Mammary epithelial cell (primary cell): ENCODE measurements at regions of chr18 and their contacts with region 1.

Region 1: DNA sequence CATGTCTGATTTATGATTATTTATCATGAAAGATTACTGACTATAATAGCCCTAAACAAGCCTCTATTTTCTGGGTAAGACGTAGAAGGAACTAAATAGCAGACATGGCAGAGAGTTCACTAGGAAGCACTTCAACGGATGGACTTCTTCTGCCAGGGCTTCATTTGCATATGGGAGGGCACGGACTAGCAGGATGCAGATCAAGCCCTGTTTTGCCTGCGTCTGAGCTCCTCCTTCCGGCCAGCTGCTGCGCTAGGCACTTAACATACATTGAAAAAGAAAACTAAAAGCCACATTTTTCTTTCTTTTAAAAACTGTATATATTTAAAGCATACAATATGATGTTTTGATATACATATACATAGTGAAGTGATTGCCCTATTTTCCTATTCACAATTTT is 340.0 kb upstream of the MEX3C start:
- DNase-seq: peak; percentile 66
- H3K4me3 ChIP-seq: no peak overlapping the region
- H3K27ac ChIP-seq: no peak overlapping the region
- H3K4me1 ChIP-seq: no peaks in the 10 kb centered on the region
- H3K27me3 ChIP-seq: no peaks in the 10 kb centered on the region
- CTCF ChIP-seq: peak; percentile 46 to 61

Region 2: GRCh38 chr18:51278045-51278649 is 259.3 kb before region 1 on chr18:
- CTCF ChIA-PET with region 1: no interaction called
- dilution Hi-C with region 1: no loop called
- in situ Hi-C with region 1: loop called (anchors 5 to 25 kb)
- intact Hi-C with region 1: loop called (anchors 1 kb)
- DNase-seq: peak; percentile 57
- H3K4me3 ChIP-seq: no peak overlapping the region
- H3K27ac ChIP-seq: no peak overlapping the region
- H3K4me1 ChIP-seq: no peaks in the 10 kb centered on the region
- H3K27me3 ChIP-seq: no peaks in the 10 kb centered on the region
- CTCF ChIP-seq: peak; percentile 96 to 98

Region 3: DNA sequence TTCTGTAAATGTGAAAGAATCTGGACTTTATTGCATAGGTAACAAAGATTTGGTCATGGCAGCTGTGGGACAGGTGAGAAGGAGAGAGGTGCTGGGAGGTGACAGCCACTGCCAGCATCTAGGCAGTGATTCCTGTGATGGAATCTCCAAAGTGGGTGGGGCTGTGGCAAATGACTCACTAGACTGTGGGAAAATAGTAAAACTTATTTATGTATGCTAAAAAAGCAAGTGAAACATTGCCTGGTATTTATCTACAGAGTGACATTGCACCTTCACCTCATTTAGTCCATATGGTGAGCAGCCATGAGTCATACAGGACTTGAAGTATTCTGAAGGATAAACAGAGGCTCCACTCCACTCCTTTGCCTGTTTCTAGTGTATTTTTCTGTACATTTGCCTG is 194.7 kb before region 1 on chr18:
- CTCF ChIA-PET with region 1: no interaction called
- dilution Hi-C with region 1: no loop called
- in situ Hi-C with region 1: no loop called
- intact Hi-C with region 1: loop called (anchors 5 kb)
- DNase-seq: peak; percentile 89
- H3K4me3 ChIP-seq: no peak overlapping the region
- H3K27ac ChIP-seq: no peak overlapping the region
- H3K4me1 ChIP-seq: peaks cover 43% of the 10 kb centered on the region
- H3K27me3 ChIP-seq: no peaks in the 10 kb centered on the region
- CTCF ChIP-seq: no peak

Region 4: DNA sequence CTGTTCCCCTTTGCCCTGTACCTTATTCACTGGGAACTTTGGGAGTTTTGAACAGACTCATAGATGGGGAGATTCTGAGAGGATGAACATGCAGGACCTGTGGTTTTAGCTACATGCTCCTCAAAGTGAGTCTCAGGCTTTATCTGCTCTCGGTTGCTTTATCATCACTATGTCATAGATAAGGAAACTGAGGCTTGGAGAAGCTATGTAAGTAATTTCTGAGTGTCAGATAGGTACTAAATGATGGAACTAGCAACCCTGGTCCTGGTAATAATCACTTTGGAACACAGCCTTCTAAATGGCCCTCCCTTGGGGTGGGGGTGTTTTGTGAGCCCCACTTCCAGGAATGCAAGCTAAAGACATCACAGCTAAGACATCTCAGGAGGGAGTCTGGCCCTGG is 153.8 kb before region 1 on chr18:
- CTCF ChIA-PET with region 1: no interaction called
- dilution Hi-C with region 1: no loop called
- in situ Hi-C with region 1: no loop called
- intact Hi-C with region 1: loop called (anchors 1 kb)
- DNase-seq: no peak
- H3K4me3 ChIP-seq: no peak overlapping the region
- H3K27ac ChIP-seq: no peak overlapping the region
- H3K4me1 ChIP-seq: no peaks in the 10 kb centered on the region
- H3K27me3 ChIP-seq: no peaks in the 10 kb centered on the region
- CTCF ChIP-seq: no peak

Region 5: GRCh38 chr18:51461956-51462355 is 75.5 kb before region 1 on chr18:
- CTCF ChIA-PET with region 1: no interaction called
- dilution Hi-C with region 1: no loop called
- in situ Hi-C with region 1: no loop called
- intact Hi-C with region 1: loop called (anchors 5 kb)
- DNase-seq: peak; percentile 55
- H3K4me3 ChIP-seq: no peak overlapping the region
- H3K27ac ChIP-seq: no peak overlapping the region
- H3K4me1 ChIP-seq: peaks cover 7% of the 10 kb centered on the region
- H3K27me3 ChIP-seq: no peaks in the 10 kb centered on the region
- CTCF ChIP-seq: no peak